CD14-positive monocyte (primary cell): ENCODE measurements at regions of chr3 and their contacts with region 1.

Region 1: DNA sequence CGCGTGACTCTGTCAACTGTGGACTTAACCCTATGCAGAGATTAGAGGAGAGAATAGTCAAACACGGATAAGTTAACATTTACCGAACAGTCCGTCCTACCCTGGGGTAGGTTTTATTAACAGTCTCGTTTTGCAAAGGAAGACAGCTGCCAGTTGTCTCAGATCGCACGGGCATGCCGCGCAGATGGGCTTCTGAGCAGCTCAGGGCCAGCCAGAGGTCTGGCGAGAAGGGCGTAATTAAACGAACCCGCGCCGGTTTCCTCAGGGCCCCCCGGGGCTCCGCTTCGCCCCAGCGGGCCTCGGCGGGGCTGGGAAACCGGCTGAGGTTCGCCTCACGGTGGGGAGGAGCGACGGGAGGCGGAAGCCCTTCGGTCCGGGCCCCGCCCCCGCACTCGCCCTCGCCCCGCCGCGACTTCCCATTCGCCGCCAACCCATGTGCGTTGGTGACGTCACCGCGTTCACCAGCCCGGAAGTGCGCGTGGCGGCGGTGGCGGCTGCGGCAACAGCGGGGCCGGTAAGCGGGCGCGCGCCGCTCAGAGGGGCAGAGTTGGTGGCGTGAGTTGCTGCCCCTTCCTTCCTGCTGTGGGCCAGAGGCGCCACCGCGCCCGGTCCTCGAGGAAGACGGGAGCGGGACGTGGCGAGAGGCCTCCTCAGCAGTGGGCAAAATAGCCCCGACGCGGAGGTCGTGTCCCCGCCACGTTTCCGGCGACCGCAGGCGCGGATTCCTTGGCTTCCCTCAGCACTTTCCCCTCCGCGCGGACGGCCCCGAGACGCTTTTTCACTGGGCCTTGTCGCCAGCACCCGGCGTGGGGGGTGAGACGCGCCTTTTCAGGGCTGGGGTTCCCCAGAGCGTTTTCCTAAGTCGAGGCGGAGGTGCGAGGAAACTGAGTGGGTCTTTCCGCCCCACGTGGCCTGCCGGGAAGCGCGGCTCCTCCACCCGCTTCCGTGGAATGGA is at the start of gene TRNT1:
- DNase-seq: peak; percentile 94
- H3K4me3 ChIP-seq: peak within 1 kb of the TSS; percentile 68 to 94 (median 89)
- H3K4me3 Mint-ChIP-seq: peak within 1 kb of the TSS; percentile 93 to 95
- H3K27ac ChIP-seq: peak within 1 kb of the TSS; percentile 84 to 98
- H3K27ac Mint-ChIP-seq: peak within 1 kb of the TSS; percentile 95 to 97 (median 95)
- H3K4me1 ChIP-seq: peaks cover 17 to 19% of the 10 kb centered on the region in 2 donors
- H3K4me1 Mint-ChIP-seq: peaks cover 20% of the 10 kb centered on the region
- H3K27me3 ChIP-seq: no peaks in the 10 kb centered on the region
- H3K27me3 Mint-ChIP-seq: no peaks in the 10 kb centered on the region
- CTCF ChIP-seq: no peak
- polyA plus RNA-seq, gene TRNT1: 4.4 to 15.8 (median 10.3) TPM

Region 2: DNA sequence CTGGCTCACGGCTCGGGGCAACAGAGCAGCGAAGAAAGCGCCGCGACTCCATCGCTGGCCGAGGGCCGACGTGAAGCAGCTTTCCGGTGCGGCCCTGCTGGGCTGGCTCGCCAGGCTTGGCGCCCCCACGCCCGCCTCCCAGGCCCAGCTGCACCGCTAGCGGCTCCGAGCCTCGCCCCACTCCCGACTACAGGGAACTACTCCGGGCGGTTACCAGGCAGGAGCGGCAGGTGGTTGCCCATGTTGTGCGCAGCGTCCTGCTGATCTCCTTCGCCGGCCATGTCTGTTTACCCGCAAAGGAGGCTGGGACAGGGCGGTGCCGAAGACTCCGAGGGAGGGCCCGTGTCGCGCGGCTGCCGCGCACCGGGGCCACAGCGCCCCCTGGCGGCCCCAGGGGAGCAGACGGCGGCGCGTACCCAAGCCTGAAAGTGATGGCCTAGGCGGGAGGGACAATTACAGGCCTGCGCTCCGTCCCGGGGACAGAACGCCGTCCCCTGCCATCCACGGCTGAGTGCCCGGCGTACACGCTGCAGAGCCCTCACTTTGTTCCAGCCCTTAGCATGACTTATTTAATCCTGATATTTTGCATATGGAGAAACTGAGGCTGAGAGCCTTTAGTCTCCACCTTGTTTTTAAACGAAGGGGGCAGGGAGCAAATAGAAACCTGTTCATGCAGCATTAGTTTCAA is 52.8 kb after region 1 on chr3 and contains the start of gene CRBN:
- intact Hi-C with region 1: loop called in 1 of 2 experiments (anchors 2 kb)
- DNase-seq: peak; percentile 80 to 85 (median 80)
- H3K4me3 ChIP-seq: peak within 1 kb of the TSS; percentile 79 to 88 (median 87)
- H3K4me3 Mint-ChIP-seq: peak within 1 kb of the TSS; percentile 74 to 88
- H3K27ac ChIP-seq: peak within 1 kb of the TSS; percentile 27 to 89
- H3K27ac Mint-ChIP-seq: peak within 1 kb of the TSS; percentile 78 to 90 (median 88)
- H3K4me1 ChIP-seq: peaks cover 17 to 34% of the 10 kb centered on the region in 2 donors
- H3K4me1 Mint-ChIP-seq: peaks cover 45% of the 10 kb centered on the region
- H3K27me3 ChIP-seq: no peaks in the 10 kb centered on the region
- H3K27me3 Mint-ChIP-seq: peaks cover 0 to 2% (median 0%) of the 10 kb centered on the region in 3 donors
- CTCF ChIP-seq: peak; percentile 97
- polyA plus RNA-seq, gene CRBN: 53.1 to 98.3 (median 96.1) TPM

Region 3: DNA sequence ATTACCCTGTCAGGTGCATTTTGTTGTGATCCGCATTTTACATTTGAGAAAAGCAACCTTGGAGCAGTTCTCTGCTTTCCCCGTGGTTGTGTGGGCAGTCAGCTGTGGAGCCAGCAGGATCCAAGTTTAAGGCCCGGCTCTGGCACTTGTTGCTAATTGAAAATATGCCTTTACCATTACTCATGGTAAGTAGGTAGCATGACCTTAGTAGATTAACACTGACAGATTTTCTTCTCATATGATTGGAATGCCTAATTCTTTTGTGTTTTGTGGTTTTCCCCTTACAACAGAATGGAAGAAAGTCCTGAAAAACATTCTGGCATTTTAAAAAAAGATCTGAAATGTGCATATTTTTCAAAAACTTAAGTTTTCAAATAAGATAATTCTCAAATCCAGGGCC is 426.0 kb after region 1 on chr3:
- intact Hi-C with region 1: no loop called
- DNase-seq: no peak
- H3K4me3 ChIP-seq: no peak overlapping the region
- H3K4me3 Mint-ChIP-seq: no peak overlapping the region
- H3K27ac ChIP-seq: no peak overlapping the region
- H3K27ac Mint-ChIP-seq: no peak overlapping the region
- H3K4me1 ChIP-seq: no peaks in the 10 kb centered on the region
- H3K4me1 Mint-ChIP-seq: no peaks in the 10 kb centered on the region
- H3K27me3 ChIP-seq: no peaks in the 10 kb centered on the region
- H3K27me3 Mint-ChIP-seq: peaks cover 0 to 1% (median 0%) of the 10 kb centered on the region in 3 donors
- CTCF ChIP-seq: no peak

Region 4: GRCh38 chr3:4303187-4304123 is 1176.7 kb after region 1 on chr3 and contains the start of gene SETMAR:
- intact Hi-C with region 1: loop called in 1 of 2 experiments (anchors 5 kb)
- DNase-seq: peak; percentile 74 to 79 (median 76)
- H3K4me3 ChIP-seq: peak within 1 kb of the TSS; percentile 78 to 93 (median 89)
- H3K4me3 Mint-ChIP-seq: peak within 1 kb of the TSS; percentile 90 to 97
- H3K27ac ChIP-seq: peak within 1 kb of the TSS; percentile 65 to 97
- H3K27ac Mint-ChIP-seq: peak within 1 kb of the TSS; percentile 89 to 100 (median 98)
- H3K4me1 ChIP-seq: peaks cover 12 to 13% of the 10 kb centered on the region in 2 donors
- H3K4me1 Mint-ChIP-seq: peaks cover 16% of the 10 kb centered on the region
- H3K27me3 ChIP-seq: no peaks in the 10 kb centered on the region
- H3K27me3 Mint-ChIP-seq: peaks cover 1 to 2% (median 2%) of the 10 kb centered on the region in 3 donors
- CTCF ChIP-seq: no peak
- polyA plus RNA-seq, gene SETMAR: 3.1 to 7.2 (median 3.5) TPM